ENCODE measurements at regions of chr14 and their contacts with region 1.

Region 1: DNA sequence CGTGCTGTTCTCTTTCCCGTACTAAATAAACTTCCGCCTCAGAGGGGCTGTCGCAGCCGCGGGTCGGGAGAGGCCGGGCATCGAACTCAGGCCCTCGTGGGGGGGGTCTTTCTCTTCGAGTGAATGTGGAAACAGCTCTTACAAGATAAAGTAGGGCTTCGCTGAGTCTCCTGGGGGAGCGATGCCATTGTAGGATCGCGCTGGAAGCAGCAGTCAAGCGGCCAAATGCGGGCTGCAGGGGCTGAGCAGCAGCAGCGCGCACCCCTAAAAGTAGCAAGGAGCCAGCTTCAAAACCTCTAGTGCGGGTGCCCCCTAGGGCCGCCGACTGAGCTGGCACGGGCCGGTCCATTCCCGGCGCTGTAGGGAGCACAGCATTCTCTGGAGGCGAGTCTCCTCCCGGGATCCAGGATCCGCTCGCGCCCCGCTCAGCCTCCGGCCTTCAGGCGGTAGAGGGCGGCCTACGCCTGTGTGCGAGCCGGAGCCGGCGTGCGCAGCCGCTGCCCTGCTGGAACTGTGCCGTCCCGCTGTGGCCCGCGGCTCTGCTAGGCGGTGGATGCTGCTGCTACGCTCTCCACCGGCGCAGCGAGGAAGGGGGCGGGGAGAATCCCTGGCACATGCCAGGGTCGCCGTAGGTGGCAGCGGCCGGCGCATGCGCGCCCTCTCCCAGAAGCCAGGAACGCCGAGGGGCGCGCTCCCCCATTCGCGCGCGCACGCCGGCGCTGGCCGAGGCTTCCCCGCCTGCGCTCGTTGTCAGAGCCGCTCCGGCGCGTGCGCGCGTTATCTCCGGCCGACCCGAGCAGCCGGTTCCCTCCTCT is at the start of gene FUT8:
- DNase-seq: peak; percentile 95
- H3K4me3 Mint-ChIP-seq: peak within 1 kb of the TSS; percentile 94
- H3K27ac Mint-ChIP-seq: peak within 1 kb of the TSS; percentile 93
- H3K4me1 Mint-ChIP-seq: peaks cover 18% of the 10 kb centered on the region
- H3K27me3 Mint-ChIP-seq: no peaks in the 10 kb centered on the region
- CTCF ChIP-seq: peak; percentile 59
- total RNA-seq, gene FUT8: 11.8 and 17.1 TPM in 2 replicates

Region 2: GRCh38 chr14:64841121-64841651 is 571.1 kb before region 1 on chr14:
- CTCF ChIA-PET with region 1: no interaction called
- POLR2A ChIA-PET with region 1: no interaction called
- intact Hi-C with region 1: no loop called
- DNase-seq: peak; percentile 65
- H3K4me3 Mint-ChIP-seq: no peak overlapping the region
- H3K27ac Mint-ChIP-seq: no peak overlapping the region
- H3K4me1 Mint-ChIP-seq: peaks cover 10% of the 10 kb centered on the region
- H3K27me3 Mint-ChIP-seq: peaks cover 68% of the 10 kb centered on the region
- CTCF ChIP-seq: peak; percentile 50

Region 3: GRCh38 chr14:65164068-65164824 is 248.0 kb before region 1 on chr14:
- CTCF ChIA-PET with region 1: interaction called, 70 read pairs
- POLR2A ChIA-PET with region 1: interaction called, 23 read pairs
- intact Hi-C with region 1: loop called (anchors 1 kb)
- DNase-seq: peak; percentile 70
- H3K4me3 Mint-ChIP-seq: no peak overlapping the region
- H3K27ac Mint-ChIP-seq: no peak overlapping the region
- H3K4me1 Mint-ChIP-seq: peaks cover 19% of the 10 kb centered on the region
- H3K27me3 Mint-ChIP-seq: no peaks in the 10 kb centered on the region
- CTCF ChIP-seq: peak; percentile 74

Region 4: DNA sequence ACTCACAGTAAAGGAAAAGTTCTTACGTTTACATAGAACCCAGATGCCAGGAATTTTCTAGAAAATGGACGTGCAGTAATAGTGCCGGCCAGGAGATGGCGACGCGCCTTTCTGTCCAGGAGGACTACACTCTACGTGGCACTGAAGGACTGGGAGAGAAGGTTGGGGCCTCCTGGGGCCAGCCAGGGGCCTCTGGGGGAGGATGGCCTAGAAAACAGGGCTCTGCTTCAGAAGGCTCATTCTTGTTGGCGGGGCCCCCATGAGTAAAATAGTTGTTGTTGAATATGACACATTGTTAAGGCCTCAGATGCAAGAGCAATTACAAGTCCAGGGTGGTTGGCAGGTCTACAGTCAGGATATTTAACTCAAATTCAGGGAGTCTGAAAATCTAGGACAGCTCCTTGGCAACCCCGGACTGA is 189.8 kb before region 1 on chr14:
- CTCF ChIA-PET with region 1: interaction called, 23 read pairs
- POLR2A ChIA-PET with region 1: interaction called, 13 read pairs
- intact Hi-C with region 1: loop called (anchors 1 kb)
- DNase-seq: peak; percentile 71
- H3K4me3 Mint-ChIP-seq: no peak overlapping the region
- H3K27ac Mint-ChIP-seq: peak overlapping the region; percentile 77
- H3K4me1 Mint-ChIP-seq: peaks cover 27% of the 10 kb centered on the region
- H3K27me3 Mint-ChIP-seq: no peaks in the 10 kb centered on the region
- CTCF ChIP-seq: peak; percentile 88

Region 5: DNA sequence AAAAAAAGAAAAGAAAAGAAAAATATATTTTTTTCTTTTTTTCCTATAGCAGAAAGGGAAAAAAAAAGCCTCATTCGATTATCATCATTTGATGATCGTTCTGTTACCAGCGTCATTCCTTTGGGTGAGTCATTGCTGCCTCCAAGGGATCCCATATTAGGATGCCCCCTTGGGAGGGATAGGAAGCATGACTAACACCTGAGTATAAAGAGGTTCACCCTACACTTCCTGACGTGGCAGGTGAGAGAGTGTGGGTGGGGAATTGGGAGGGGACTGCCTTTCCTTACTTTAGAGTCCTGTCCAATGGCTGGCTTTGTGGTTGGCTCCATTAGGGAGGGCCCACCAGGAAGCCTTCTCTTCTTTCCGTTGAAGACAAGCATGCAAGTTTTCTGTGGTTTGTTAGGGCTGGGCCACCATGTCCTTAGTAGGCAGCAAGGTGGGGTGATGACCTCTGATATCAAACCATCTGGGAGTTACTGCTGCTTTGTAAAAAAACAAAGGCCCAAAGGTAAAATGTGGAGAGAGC is 55.8 kb before region 1 on chr14:
- CTCF ChIA-PET with region 1: interaction called, 7 read pairs
- POLR2A ChIA-PET with region 1: interaction called, 14 read pairs
- intact Hi-C with region 1: loop called (anchors 5 kb)
- DNase-seq: peak; percentile 99
- H3K4me3 Mint-ChIP-seq: peak overlapping the region; percentile 39
- H3K27ac Mint-ChIP-seq: peak overlapping the region; percentile 88
- H3K4me1 Mint-ChIP-seq: peaks cover 42% of the 10 kb centered on the region
- H3K27me3 Mint-ChIP-seq: no peaks in the 10 kb centered on the region
- CTCF ChIP-seq: no peak

Region 6: GRCh38 chr14:65686761-65687160 is 274.5 kb after region 1 on chr14:
- CTCF ChIA-PET with region 1: no interaction called
- POLR2A ChIA-PET with region 1: no interaction called
- intact Hi-C with region 1: no loop called
- DNase-seq: peak; percentile 4
- H3K4me3 Mint-ChIP-seq: no peak overlapping the region
- H3K27ac Mint-ChIP-seq: no peak overlapping the region
- H3K4me1 Mint-ChIP-seq: no peaks in the 10 kb centered on the region
- H3K27me3 Mint-ChIP-seq: no peaks in the 10 kb centered on the region
- CTCF ChIP-seq: no peak

Region 7: DNA sequence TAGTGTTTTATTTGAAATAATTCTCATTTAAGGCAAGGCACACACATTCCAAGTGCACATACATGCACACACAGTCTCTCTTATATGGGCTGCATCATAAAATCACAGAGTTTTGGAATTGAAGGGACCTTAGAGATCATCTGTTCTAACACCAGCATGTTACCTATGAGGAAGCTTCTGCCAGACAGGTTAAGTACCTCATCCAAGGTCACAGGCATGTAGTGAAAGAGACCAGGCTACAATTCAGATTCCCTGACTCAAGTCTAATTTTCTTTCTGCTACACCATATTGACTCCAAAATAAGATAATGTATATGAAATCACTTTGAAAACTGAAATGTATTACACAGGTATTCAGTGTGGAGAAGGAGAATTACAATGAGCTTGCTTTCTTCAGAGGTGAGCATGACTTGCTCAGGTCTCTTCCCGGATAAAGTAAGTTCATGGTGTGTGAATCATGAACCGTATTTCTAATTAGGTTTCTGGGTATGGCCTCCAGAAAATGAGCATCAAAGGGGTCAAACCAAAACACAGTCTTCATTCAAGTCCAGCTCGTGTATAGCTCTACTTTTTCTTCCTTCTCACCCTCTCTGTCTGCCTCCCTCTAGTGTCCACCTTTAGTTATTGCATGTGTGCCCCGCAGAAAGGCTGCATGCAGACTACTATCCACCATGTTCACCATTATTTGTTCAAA is 412.2 kb after region 1 on chr14:
- CTCF ChIA-PET with region 1: interaction called, 194 read pairs
- POLR2A ChIA-PET with region 1: interaction called, 54 read pairs
- intact Hi-C with region 1: loop called (anchors 1 kb)
- DNase-seq: peak; percentile 70
- H3K4me3 Mint-ChIP-seq: no peak overlapping the region
- H3K27ac Mint-ChIP-seq: no peak overlapping the region
- H3K4me1 Mint-ChIP-seq: no peaks in the 10 kb centered on the region
- H3K27me3 Mint-ChIP-seq: peaks cover 34% of the 10 kb centered on the region
- CTCF ChIP-seq: peak; percentile 90